Heart right ventricle (tissue), 16 donors: ENCODE measurements at regions of chr9 and their contacts with region 1.

Region 1: DNA sequence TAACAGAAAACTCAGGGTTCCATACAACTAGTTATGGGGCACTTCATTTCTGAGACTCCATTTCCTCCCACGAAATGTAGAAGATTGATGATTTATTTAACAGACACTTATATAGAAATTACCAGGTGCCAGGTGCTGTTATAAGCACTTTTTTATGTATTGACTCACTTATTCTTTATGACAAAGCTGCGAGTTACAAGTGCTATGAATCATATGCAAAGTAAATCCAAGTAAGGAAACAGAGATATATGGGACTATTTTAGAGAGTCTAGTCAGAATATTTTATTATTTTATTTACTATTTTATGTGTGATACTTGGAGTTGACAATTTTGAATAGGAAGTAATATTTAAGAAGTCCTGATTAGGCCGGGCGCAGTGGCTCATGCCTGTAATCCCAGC is 822.8 kb upstream of the C9orf72 start:
- DNase-seq: no peak
- ATAC-seq: no peak
- H3K4me3 ChIP-seq: no peak overlapping the region
- H3K27ac ChIP-seq: no peak overlapping the region
- H3K4me1 ChIP-seq: no peaks in the 10 kb centered on the region
- H3K27me3 ChIP-seq: no peaks in the 10 kb centered on the region
- CTCF ChIP-seq: no peak

Region 2: DNA sequence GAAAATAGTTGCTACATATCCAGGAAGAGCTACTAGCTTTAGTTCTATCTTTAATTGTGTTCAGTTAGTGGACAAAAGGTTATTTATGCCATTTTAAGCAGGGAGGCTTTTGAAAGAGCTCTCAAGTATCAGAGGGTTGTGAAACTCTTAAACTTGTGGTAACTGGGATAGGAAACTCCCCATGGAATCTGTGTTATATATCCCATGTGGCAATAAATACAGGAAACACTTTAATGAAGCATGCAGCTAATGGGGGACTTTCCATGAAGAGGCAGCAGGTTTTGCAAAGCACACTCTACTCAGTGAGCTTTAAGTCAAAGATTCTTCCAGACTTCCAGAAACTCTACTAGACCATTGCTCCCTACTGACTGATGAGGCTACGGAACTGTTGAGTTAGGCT is 17.8 kb before region 1 on chr9:
- intact Hi-C with region 1: loop called in 1 of 10 experiments (anchors 2 kb)
- DNase-seq: no peak
- ATAC-seq: no peak
- H3K4me3 ChIP-seq: no peak overlapping the region
- H3K27ac ChIP-seq: no peak overlapping the region
- H3K4me1 ChIP-seq: no peaks in the 10 kb centered on the region
- H3K27me3 ChIP-seq: no peaks in the 10 kb centered on the region
- CTCF ChIP-seq: no peak